B cell (primary cell): ENCODE measurements at regions of chr3 and their contacts with region 1.

Region 1: DNA sequence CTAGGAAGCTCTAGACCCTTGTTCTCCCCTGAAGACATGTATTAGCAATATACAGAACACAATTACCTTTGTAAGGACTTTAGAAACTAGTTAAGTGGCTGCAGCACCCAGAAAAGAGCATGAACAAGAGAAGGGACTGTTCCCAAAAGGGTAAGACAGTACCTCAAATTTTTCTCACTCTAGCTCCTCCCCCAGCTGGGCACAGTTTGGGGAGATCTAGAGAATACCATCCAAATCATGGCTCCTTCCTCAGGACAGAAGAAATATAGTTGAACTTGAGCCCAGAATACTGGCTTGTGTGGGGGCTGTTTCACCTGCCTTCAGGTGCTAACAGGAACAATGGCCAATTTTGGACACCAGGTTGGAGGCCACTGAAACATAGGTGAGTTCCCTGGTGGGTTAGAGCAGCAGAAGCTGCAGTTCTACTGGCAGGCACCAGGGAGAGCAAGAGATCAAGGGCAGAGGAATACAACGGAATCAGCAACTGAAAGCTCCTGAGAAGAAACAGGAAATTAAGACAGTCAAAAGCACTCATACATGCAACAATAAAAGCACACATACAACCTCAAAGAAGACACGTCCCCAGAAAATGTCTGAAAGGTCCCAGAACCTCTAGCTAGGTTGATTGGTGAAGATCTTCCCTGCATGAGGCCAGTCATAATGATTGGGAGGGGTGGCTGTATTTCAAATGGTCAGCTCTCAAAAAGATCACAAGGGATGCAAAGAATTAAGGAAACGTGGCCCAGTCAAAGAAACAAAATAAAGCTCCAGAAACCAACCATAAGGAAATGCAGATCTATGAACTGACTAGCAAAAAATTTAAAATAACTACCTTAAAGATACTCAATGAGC is 104.9 kb upstream of the ASB14 start:
- DNase-seq: peak; percentile 74
- ATAC-seq: peak; percentile 97
- H3K4me3 ChIP-seq: peak overlapping the region in 1 of 5 experiments; percentile 29
- H3K4me3 Mint-ChIP-seq: peak overlapping the region; percentile 8
- H3K27ac ChIP-seq: no peak overlapping the region
- H3K27ac Mint-ChIP-seq: peak overlapping the region; percentile 2
- H3K4me1 ChIP-seq: peaks cover 12% of the 10 kb centered on the region in 2 donors
- H3K4me1 Mint-ChIP-seq: peaks cover 19% of the 10 kb centered on the region
- H3K27me3 ChIP-seq: no peaks in the 10 kb centered on the region
- H3K27me3 Mint-ChIP-seq: peaks cover 15% of the 10 kb centered on the region
- CTCF ChIP-seq: peak; percentile 84

Region 2: GRCh38 chr3:57582474-57583168 is 185.2 kb after region 1 on chr3:
- CTCF ChIA-PET with region 1: no interaction called
- POLR2A ChIA-PET with region 1: no interaction called
- intact Hi-C with region 1: loop called (anchors 1 kb)
- DNase-seq: peak; percentile 46
- ATAC-seq: peak; percentile 21
- H3K4me3 ChIP-seq: no peak overlapping the region
- H3K4me3 Mint-ChIP-seq: no peak overlapping the region
- H3K27ac ChIP-seq: no peak overlapping the region
- H3K27ac Mint-ChIP-seq: peak overlapping the region; percentile 37
- H3K4me1 ChIP-seq: peaks cover 0 to 5% of the 10 kb centered on the region in 2 donors
- H3K4me1 Mint-ChIP-seq: peaks cover 23% of the 10 kb centered on the region
- H3K27me3 ChIP-seq: no peaks in the 10 kb centered on the region
- H3K27me3 Mint-ChIP-seq: no peaks in the 10 kb centered on the region
- CTCF ChIP-seq: peak; percentile 30

Region 3: GRCh38 chr3:57826245-57826951 is 429.0 kb after region 1 on chr3:
- CTCF ChIA-PET with region 1: interaction called, 23 read pairs
- POLR2A ChIA-PET with region 1: no interaction called
- intact Hi-C with region 1: no loop called
- DNase-seq: no peak
- ATAC-seq: no peak
- H3K4me3 ChIP-seq: no peak overlapping the region
- H3K4me3 Mint-ChIP-seq: no peak overlapping the region
- H3K27ac ChIP-seq: no peak overlapping the region
- H3K27ac Mint-ChIP-seq: no peak overlapping the region
- H3K4me1 ChIP-seq: no peaks in the 10 kb centered on the region
- H3K4me1 Mint-ChIP-seq: peaks cover 24% of the 10 kb centered on the region
- H3K27me3 ChIP-seq: no peaks in the 10 kb centered on the region
- H3K27me3 Mint-ChIP-seq: no peaks in the 10 kb centered on the region
- CTCF ChIP-seq: no peak

Region 4: DNA sequence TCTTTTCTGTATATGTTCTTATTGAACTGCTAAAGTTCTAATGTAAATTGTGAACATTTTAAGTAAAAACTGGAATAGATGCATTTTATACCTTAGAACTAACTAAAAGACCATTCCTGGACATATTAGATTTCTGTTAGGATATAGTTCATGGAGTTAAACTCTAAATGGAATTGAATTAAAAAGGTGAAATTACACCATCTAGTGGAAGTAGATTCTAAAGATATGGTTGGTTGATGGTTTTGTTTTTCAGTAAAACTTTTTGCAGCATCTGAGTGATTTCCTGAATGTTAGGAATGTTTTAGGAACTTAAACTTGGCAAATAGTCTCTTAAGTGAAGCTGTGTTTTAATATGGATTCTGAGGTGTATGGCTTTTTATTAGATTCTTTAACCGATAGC is 455.5 kb after region 1 on chr3:
- CTCF ChIA-PET with region 1: interaction called, 20 read pairs
- POLR2A ChIA-PET with region 1: no interaction called
- intact Hi-C with region 1: loop called (anchors 2 kb)
- DNase-seq: no peak
- ATAC-seq: no peak
- H3K4me3 ChIP-seq: no peak overlapping the region
- H3K4me3 Mint-ChIP-seq: no peak overlapping the region
- H3K27ac ChIP-seq: no peak overlapping the region
- H3K27ac Mint-ChIP-seq: no peak overlapping the region
- H3K4me1 ChIP-seq: no peaks in the 10 kb centered on the region
- H3K4me1 Mint-ChIP-seq: no peaks in the 10 kb centered on the region
- H3K27me3 ChIP-seq: no peaks in the 10 kb centered on the region
- H3K27me3 Mint-ChIP-seq: no peaks in the 10 kb centered on the region
- CTCF ChIP-seq: peak; percentile 25

Region 5: DNA sequence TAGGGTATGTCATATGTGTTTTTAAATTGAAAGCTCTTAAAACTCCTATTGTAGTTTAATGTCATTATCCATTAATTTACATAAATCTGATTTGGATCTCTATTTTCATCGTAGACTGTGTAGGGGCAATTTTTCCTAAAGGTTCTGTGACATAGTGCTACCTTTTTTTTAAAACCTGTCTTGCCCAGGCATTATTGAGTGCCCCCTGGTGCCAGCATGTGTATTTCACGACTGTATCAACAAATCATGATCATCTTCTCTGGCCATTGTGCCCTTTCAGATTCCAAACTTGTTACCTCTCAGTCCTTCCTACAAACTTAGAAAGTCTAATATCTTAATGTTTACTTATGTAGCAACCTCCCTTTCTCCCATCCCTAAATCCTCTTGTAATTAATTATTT is 513.6 kb after region 1 on chr3:
- CTCF ChIA-PET with region 1: interaction called, 23 read pairs
- POLR2A ChIA-PET with region 1: no interaction called
- intact Hi-C with region 1: loop called (anchors 1 kb)
- DNase-seq: peak; percentile 38
- ATAC-seq: no peak
- H3K4me3 ChIP-seq: no peak overlapping the region
- H3K4me3 Mint-ChIP-seq: no peak overlapping the region
- H3K27ac ChIP-seq: no peak overlapping the region
- H3K27ac Mint-ChIP-seq: no peak overlapping the region
- H3K4me1 ChIP-seq: no peaks in the 10 kb centered on the region
- H3K4me1 Mint-ChIP-seq: no peaks in the 10 kb centered on the region
- H3K27me3 ChIP-seq: no peaks in the 10 kb centered on the region
- H3K27me3 Mint-ChIP-seq: no peaks in the 10 kb centered on the region
- CTCF ChIP-seq: peak; percentile 57

Region 6: DNA sequence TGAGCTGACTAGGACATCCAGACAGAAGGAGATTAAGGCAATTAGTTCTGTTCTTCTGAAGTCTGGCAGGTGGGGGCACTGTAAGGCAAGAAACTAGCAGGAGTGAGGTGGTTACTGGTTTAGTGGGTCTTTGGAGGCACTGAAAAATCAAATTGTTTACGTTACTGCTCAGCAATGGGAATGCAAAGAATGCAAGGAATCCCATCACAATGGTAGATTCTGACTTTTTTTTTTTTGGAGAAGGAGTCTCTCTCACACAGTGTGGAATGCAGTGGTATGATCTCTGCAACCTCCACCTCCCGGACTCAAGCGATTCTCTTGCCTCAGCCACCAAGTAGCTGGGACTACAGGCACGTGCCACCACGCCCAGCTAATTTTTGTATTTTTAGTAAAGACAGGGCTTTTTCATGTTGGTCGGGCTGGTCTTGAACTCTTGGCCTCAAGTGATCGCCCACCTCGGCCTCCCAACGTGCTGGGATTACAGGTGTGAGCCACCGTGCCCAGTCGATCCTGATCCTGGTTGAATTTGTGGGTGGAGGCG is 1163.4 kb after region 1 on chr3:
- CTCF ChIA-PET with region 1: no interaction called
- POLR2A ChIA-PET with region 1: no interaction called
- intact Hi-C with region 1: no loop called
- DNase-seq: no peak
- ATAC-seq: no peak
- H3K4me3 ChIP-seq: no peak overlapping the region
- H3K4me3 Mint-ChIP-seq: no peak overlapping the region
- H3K27ac ChIP-seq: no peak overlapping the region
- H3K27ac Mint-ChIP-seq: no peak overlapping the region
- H3K4me1 ChIP-seq: no peaks in the 10 kb centered on the region
- H3K4me1 Mint-ChIP-seq: no peaks in the 10 kb centered on the region
- H3K27me3 ChIP-seq: peaks cover 0 to 8% (median 0%) of the 10 kb centered on the region in 4 experiments
- H3K27me3 Mint-ChIP-seq: peaks cover 22% of the 10 kb centered on the region
- CTCF ChIP-seq: no peak